HEK293 (cell line): ENCODE measurements at regions of chrX and their contacts with region 1.

Region 1: DNA sequence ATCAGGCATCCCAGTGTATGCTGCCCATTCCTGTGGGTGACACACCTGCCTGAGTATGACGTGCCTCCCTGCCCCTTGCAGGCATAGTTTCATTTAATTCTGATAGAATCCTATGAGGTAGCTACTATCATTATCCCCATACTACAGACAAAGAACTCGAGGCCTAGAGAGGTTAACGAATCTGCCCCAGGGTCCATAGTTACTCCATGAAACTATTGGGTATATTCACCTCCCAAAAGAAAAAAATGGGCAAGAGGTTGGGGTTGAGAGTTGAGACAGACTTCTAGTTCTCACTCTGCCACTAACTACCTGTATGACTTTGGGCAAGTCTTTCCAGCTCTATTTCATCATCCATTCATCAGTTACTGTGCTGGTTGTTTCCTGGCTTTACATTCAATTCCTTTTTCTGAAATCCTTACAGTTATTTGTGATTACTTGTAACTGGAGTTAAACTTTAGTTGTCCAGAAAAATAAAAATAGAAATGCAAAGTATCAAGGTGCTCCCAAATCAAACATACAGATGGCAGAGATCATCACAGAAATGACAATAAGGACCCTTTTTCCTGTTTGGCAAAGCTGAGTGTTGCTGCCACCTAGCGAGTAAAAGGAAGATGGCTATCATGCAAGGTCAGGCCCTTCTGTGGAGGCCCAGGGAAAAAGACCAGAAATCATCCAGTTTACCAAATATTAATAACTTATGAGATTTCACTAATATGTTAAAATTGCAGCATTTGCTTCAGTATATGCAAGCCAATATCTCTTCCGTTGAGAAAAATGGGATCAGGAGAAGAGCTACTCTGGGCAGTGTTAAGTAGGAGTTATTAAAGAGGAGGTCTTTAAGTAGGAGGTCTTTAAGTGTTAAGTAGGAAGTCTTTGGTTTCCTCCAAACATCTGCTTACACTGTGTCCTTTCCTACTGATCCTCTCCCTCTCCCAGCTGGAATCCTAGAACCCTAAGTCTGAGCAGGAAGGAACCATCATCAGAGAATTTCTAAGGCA is 17.1 kb upstream of the MAP7D3 start:
- H3K4me3 ChIP-seq: no peak overlapping the region
- H3K27ac ChIP-seq: no peak overlapping the region
- H3K4me1 ChIP-seq: 0 out of 2 replicates have a peak, but pooled peaks cover 3% of the 10 kb centered on the region
- CTCF ChIP-seq: peak; percentile 53; the same call in 1 of the 2 replicates

Region 2: GRCh38 chrX:136034668-136035067 is 233.7 kb before region 1 on chrX:
- CTCF ChIA-PET with region 1: interaction called, 96 read pairs
- POLR2A ChIA-PET with region 1: no interaction called
- H3K4me3 ChIP-seq: no peak overlapping the region
- H3K27ac ChIP-seq: no peak overlapping the region
- H3K4me1 ChIP-seq: peaks cover 14% of the 10 kb centered on the region
- CTCF ChIP-seq: no peak

Region 3: GRCh38 chrX:136255541-136255940 is 12.8 kb before region 1 on chrX:
- CTCF ChIA-PET with region 1: interaction called, 25 read pairs
- POLR2A ChIA-PET with region 1: no interaction called
- H3K4me3 ChIP-seq: no peak overlapping the region
- H3K27ac ChIP-seq: no peak overlapping the region
- H3K4me1 ChIP-seq: peaks cover 4% of the 10 kb centered on the region; the same call in 1 of the 2 replicates
- CTCF ChIP-seq: no peak

Region 4: DNA sequence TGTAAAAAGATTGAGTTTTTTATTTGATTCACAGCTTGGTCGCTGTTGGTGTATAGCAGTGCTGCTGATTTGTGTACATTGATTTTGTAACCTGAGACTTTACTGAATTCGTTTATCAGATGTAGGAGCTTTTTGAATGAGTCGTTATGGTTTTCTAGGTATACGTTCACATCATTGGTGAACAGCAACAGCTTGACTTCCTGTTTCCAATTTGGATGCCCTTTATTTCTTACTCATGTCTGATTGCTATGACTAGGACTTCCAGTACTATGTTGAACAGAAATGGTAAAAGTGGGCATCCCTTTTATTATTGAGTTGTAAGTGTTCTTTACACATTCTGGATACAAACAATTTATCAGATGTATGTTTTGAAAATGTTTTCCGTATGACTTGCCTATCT is 108.4 kb after region 1 on chrX:
- CTCF ChIA-PET with region 1: no interaction called
- POLR2A ChIA-PET with region 1: no interaction called
- H3K4me3 ChIP-seq: no peak overlapping the region
- H3K27ac ChIP-seq: no peak overlapping the region
- H3K4me1 ChIP-seq: no peaks in the 10 kb centered on the region
- CTCF ChIP-seq: no peak